Activated naive CD4-positive, alpha-beta T cell treated with anti-CD3 and anti-CD28 coated beads for 36 hours (primary cell): ENCODE measurements at regions of chr9 and their contacts with region 1.

Region 1: DNA sequence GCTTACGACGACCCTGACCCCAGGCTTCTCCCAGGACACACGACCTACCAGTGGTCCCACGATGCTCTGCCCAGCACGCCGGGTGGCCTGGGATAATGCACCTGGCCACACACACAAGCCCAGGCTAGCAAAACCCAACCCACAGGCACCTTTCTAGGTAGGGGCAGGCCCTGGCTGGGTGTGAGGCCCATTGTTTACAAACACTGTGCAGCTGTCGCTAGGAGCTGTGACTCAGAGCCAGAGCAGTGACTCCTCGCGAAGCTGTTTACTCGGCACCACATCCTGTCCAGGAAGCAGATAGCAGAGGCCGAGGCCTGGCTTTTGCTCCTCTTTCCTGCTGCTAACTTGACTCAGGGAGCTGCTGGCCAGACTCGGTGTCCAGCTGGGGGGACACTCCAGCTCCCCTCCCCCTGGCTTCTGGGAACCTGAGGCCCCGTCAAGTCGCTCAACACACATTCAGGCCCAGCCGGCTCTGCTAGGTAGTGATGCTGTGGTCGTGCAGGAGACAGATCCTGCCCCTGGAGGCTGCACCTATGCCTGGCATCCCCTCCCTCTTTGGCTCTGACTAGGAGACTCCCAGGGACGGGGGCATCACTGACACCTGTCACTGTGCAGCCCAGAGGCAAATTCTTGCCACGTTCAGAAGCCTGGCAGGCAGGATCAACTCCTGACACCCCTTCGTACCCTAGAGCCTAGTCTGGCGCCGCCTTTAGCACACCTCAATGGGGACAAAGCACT is 12.8 kb upstream of the RALGDS start:
- DNase-seq: peak; percentile 96
- H3K4me3 Mint-ChIP-seq: peak overlapping the region; percentile 38
- H3K27ac Mint-ChIP-seq: peak overlapping the region; percentile 96
- H3K4me1 Mint-ChIP-seq: peaks cover 70% of the 10 kb centered on the region
- H3K27me3 Mint-ChIP-seq: no peaks in the 10 kb centered on the region

Region 2: DNA sequence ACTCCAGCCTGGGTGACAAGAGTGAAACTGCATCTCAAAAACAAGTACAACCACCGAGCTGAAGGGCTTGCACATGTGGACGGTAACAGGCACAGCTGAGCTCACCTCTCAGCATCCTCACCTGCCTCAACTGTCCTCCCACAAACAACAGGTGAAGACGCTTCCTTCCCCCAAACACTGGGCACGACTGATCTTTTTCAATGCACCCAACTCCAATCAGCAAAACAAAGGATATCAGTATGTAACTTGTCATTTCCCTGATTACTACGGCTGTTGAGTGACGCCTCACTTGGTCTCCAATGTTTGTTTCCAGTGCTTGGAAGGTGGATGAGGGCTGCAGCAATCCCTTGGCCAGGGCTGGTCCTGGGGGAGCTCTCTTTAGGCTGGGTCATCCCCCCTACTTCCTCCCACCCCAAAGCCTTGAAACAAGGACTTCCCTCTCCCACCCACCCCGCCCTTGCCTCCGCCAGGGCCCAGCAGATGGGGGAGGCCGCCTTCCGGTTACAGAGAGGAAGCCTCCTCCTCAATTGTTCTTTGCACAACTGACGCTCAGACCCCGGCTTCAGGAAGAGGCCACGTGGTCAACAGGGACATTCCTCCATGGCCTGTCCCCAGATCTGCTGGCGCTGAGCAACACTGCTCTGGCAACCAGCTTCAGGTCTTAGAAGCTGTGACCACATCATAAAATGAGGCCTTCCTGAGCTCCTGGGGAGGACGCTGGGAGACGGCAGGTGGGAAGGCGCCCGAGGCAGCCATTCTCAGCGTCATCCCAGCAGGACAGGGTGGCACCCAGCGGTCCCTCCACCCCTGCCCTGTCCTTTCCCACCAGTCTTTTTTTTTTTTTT is 1863.5 kb before region 1 on chr9:
- CTCF ChIA-PET with region 1: no interaction called
- intact Hi-C with region 1: loop called (anchors 5 kb)
- DNase-seq: peak; percentile 81
- H3K4me3 Mint-ChIP-seq: peak overlapping the region; percentile 96
- H3K27ac Mint-ChIP-seq: peak overlapping the region; percentile 99
- H3K4me1 Mint-ChIP-seq: peaks cover 56% of the 10 kb centered on the region
- H3K27me3 Mint-ChIP-seq: no peaks in the 10 kb centered on the region

Region 3: DNA sequence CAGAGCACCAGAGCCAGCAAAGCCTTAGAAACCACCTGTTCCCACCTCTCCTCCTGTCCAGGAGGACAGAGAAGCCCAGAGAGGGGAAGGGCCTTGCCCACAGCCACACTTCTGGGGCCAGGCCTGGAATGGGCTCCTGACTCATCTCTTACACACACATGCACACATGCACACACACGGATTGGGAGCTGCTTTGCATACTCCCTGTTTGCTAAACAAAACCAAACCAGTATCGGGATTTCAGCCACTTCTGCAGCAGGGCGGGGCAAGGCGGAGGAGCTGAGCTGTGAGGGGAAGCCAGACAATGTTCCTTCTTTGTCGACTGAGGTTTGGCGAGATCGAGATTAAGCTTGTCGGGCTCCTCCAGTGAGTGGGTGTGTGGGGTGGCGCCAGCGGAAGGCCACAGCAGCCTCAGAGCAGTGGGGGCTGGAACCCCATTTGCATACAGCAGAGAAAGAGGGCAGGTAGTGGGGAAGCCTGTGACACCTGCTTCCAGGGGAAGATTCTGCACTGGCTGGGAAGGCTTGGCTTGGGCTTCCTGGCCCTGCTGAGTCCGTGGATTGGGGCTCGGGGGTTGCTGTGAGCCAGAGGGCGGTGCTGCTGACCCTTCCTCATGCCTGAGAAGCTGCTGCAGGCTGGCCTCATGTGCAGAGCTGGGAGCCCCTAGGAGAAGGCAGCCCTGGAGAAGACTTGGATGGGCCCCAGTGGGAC is 139.3 kb before region 1 on chr9:
- CTCF ChIA-PET with region 1: no interaction called
- intact Hi-C with region 1: no loop called
- DNase-seq: no peak
- H3K4me3 Mint-ChIP-seq: no peak overlapping the region
- H3K27ac Mint-ChIP-seq: no peak overlapping the region
- H3K4me1 Mint-ChIP-seq: peaks cover 5% of the 10 kb centered on the region
- H3K27me3 Mint-ChIP-seq: no peaks in the 10 kb centered on the region

Region 4: GRCh38 chr9:133121198-133121939 is 12.5 kb before region 1 on chr9 and contains the start of gene RALGDS:
- CTCF ChIA-PET with region 1: interaction called, 3 read pairs
- intact Hi-C with region 1: loop called (anchors 1 kb)
- DNase-seq: peak; percentile 91
- H3K4me3 Mint-ChIP-seq: peak within 1 kb of the TSS; percentile 78
- H3K27ac Mint-ChIP-seq: peak within 1 kb of the TSS; percentile 89
- H3K4me1 Mint-ChIP-seq: peaks cover 43% of the 10 kb centered on the region
- H3K27me3 Mint-ChIP-seq: no peaks in the 10 kb centered on the region
- total RNA-seq, gene RALGDS: 29.5 to 32.5 TPM